CD8-positive, alpha-beta memory T cell (primary cell): ENCODE measurements at regions of chr1 and their contacts with region 1.

Region 1: DNA sequence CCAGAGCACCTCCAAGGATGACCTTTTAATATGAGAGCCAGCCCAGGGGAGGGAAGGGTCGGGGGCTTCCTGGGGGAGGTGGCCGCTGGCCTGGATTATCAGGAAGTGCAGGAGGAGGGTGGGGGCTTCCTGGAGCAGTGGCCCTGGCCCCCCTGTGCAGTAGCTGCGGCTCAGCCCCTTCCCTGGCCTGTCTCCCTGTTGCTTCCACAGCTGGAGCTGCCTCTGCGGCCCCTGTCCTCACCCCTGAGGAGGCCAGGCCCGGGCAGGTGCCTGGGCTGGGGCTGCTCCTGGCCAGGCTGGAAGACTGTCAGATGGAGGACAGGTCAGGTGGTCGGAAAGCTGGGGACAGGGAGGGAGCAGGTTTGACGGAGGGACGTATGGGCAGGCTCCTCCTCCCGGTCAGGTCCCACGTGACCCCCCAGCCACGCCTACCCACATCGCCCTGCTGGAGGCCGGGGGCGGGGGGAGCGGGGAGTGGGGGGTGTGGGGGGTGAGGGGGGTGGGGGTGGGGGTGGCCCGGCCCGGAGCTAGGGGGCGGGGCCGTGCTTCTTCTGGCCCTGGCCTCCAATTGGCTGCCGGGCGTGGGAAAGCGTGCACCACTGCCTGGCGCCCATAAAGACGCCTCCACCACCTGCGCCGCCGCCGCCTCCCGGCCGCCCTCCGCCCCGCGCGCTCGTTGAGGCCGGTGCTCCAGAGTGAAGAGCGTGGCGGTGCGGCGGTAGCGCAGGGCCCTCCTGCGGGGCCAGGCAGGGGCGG is 10.2 kb upstream of the TNFRSF14 start:
- DNase-seq: peak; percentile 86 to 92 (median 88)
- H3K4me3 ChIP-seq: peak overlapping the region; percentile 96
- H3K4me3 Mint-ChIP-seq: peak overlapping the region; percentile 91 to 98 (median 94)
- H3K27ac ChIP-seq: peak overlapping the region; percentile 92
- H3K27ac Mint-ChIP-seq: peak overlapping the region; percentile 50 to 100 (median 96)
- H3K4me1 ChIP-seq: peaks cover 52% of the 10 kb centered on the region
- H3K4me1 Mint-ChIP-seq: peaks cover 13 to 53% (median 19%) of the 10 kb centered on the region in 3 donors
- H3K27me3 ChIP-seq: no peaks in the 10 kb centered on the region
- H3K27me3 Mint-ChIP-seq: no peaks in the 10 kb centered on the region

Region 2: DNA sequence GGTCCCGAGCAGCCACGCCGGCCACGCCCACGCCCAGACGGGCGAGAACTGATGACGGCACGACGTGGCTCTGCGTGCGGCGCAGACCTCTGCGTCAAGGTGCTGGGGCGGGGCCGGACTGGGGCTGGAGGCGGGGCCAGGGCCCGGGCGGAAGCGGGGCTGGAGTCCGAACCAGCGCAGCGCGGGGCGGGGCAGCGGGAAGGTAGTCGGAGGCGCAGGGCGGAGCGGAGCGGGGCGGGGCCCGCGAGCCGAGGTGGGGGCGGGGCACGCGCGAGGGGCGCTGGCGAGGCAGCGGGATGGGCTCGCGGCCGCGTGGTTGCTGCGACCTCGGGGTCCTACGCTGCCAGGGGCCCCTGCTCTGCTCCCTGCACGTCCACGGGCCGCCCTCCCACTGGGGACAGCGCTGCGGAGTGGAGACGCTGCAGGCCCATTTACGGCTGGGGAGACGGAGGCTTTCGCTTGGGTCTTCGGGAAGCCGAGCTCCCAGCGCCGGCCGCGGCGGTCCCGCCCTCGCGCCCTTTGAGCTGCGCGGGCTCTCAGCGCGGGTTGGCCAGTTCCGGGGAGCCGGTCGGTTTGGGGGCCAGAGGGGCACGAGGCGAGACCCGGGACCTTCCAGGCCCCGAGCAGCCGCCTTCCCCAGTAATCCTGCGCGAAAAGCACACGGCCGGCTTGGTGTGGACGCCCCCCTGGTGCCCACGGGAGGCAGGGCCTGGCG is 133.3 kb before region 1 on chr1 and contains the start of gene PEX10:
- CTCF ChIA-PET with region 1: interaction called, 49 read pairs
- POLR2A ChIA-PET with region 1: interaction called, 20 read pairs
- DNase-seq: peak; percentile 98 to 99 (median 98)
- H3K4me3 ChIP-seq: peak within 1 kb of the TSS; percentile 78
- H3K4me3 Mint-ChIP-seq: peak within 1 kb of the TSS; percentile 79 to 94 (median 87)
- H3K27ac ChIP-seq: peak within 1 kb of the TSS; percentile 90
- H3K27ac Mint-ChIP-seq: peak within 1 kb of the TSS; percentile 81 to 97 (median 88)
- H3K4me1 ChIP-seq: peaks cover 52% of the 10 kb centered on the region
- H3K4me1 Mint-ChIP-seq: peaks cover 30 to 51% (median 30%) of the 10 kb centered on the region in 3 donors
- H3K27me3 ChIP-seq: no peaks in the 10 kb centered on the region
- H3K27me3 Mint-ChIP-seq: no peaks in the 10 kb centered on the region
- total RNA-seq, gene PEX10: 25.6 to 26.2 TPM

Region 3: GRCh38 chr1:2519029-2519685 is 26.8 kb before region 1 on chr1:
- CTCF ChIA-PET with region 1: interaction called, 134 read pairs
- POLR2A ChIA-PET with region 1: interaction called, 87 read pairs
- DNase-seq: no peak
- H3K4me3 ChIP-seq: no peak overlapping the region
- H3K4me3 Mint-ChIP-seq: no peak overlapping the region
- H3K27ac ChIP-seq: no peak overlapping the region
- H3K27ac Mint-ChIP-seq: peak overlapping the region in 1 of 8 donors; percentile 43
- H3K4me1 ChIP-seq: peaks cover 17% of the 10 kb centered on the region
- H3K4me1 Mint-ChIP-seq: peaks cover 20 to 32% (median 21%) of the 10 kb centered on the region in 3 donors
- H3K27me3 ChIP-seq: no peaks in the 10 kb centered on the region
- H3K27me3 Mint-ChIP-seq: no peaks in the 10 kb centered on the region

Region 4: DNA sequence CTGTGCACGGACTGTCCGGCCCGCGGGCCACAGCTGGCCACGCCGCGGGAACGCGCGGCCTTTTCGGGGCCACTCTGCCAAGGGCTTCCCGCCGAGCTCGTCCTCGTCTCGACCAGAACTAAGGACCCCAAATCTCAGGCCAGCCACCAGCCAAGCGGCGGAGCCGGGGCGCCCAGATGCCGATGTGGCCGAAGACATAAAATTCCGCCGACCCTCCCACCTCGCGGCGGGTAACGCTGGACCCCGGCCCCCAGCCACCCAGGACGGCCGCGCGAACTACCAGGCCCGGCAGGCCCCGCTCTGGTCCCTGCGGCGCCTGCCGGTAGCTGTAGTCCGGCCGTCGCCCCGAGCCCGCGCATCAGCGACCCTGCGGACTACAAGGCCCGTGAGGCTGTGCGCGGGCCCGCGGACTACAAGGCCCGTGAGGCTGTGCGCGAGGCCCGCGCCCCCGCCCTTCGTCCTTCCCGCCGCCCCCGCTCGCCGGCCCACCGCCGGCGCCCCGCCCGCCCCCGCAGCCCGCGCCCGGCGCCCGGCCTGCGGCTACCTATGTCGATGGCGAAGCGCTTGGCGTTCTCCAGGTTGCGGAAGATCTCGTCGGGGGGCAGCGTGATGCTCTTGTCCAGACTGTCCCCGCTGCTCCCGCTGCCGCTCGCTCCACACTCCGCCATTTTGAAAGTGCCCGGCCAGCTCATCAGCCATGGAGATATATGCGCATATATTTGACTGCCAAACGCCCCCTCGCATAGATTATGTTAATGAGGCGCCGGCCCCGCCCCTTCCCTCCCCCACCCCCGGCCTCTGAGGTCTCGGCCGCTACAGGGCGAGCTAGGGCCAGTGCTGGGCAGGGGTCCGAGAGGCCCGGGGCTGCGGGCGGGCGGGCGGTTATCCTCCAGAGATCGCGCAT is 19.8 kb before region 1 on chr1 and contains the start of gene PANK4:
- CTCF ChIA-PET with region 1: interaction called, 134 read pairs
- POLR2A ChIA-PET with region 1: interaction called, 87 read pairs
- DNase-seq: peak; percentile 79 to 90 (median 85)
- H3K4me3 ChIP-seq: peak within 1 kb of the TSS; percentile 93
- H3K4me3 Mint-ChIP-seq: peak within 1 kb of the TSS; percentile 88 to 99 (median 90)
- H3K27ac ChIP-seq: peak within 1 kb of the TSS; percentile 62
- H3K27ac Mint-ChIP-seq: peak within 1 kb of the TSS; percentile 86 to 98 (median 97)
- H3K4me1 ChIP-seq: peaks cover 57% of the 10 kb centered on the region
- H3K4me1 Mint-ChIP-seq: peaks cover 40 to 69% (median 44%) of the 10 kb centered on the region in 3 donors
- H3K27me3 ChIP-seq: peaks cover 7% of the 10 kb centered on the region
- H3K27me3 Mint-ChIP-seq: peaks cover 9 to 11% of the 10 kb centered on the region in 2 donors
- total RNA-seq, gene PANK4: 40.3 to 46.3 TPM

Region 5: GRCh38 chr1:3283849-3284248 is 737.9 kb after region 1 on chr1:
- CTCF ChIA-PET with region 1: no interaction called
- POLR2A ChIA-PET with region 1: no interaction called
- DNase-seq: no peak
- H3K4me3 ChIP-seq: no peak overlapping the region
- H3K4me3 Mint-ChIP-seq: no peak overlapping the region
- H3K27ac ChIP-seq: no peak overlapping the region
- H3K27ac Mint-ChIP-seq: no peak overlapping the region
- H3K4me1 ChIP-seq: no peaks in the 10 kb centered on the region
- H3K4me1 Mint-ChIP-seq: no peaks in the 10 kb centered on the region
- H3K27me3 ChIP-seq: no peaks in the 10 kb centered on the region
- H3K27me3 Mint-ChIP-seq: peaks cover 0 to 3% of the 10 kb centered on the region in 2 donors